Activated CD8-positive, alpha-beta memory T cell treated with anti-CD3 and anti-CD28 coated beads, Interleukin-2, amount 10 ng/mL, durations not matched to agents 7 days and 5 days (primary cell): ENCODE measurements at regions of chr6 and their contacts with region 1.

Region 1: GRCh38 chr6:5302995-5303622 is 41.8 kb downstream of the FARS2 start:
- DNase-seq: peak; percentile 84
- ATAC-seq: peak; percentile 73
- H3K4me3 Mint-ChIP-seq: peak overlapping the region; percentile 69
- H3K27ac Mint-ChIP-seq: peak overlapping the region; percentile 91
- H3K4me1 Mint-ChIP-seq: peaks cover 52% of the 10 kb centered on the region
- H3K27me3 Mint-ChIP-seq: no peaks in the 10 kb centered on the region

Region 2: GRCh38 chr6:5174244-5174643 is 128.9 kb before region 1 on chr6:
- CTCF ChIA-PET with region 1: interaction called, 22 read pairs
- DNase-seq: peak; percentile 89
- ATAC-seq: peak; percentile 99
- H3K4me3 Mint-ChIP-seq: peak overlapping the region; percentile 60
- H3K27ac Mint-ChIP-seq: peak overlapping the region; percentile 95
- H3K4me1 Mint-ChIP-seq: peaks cover 50% of the 10 kb centered on the region
- H3K27me3 Mint-ChIP-seq: no peaks in the 10 kb centered on the region

Region 3: GRCh38 chr6:5260661-5261544 is 42.2 kb before region 1 on chr6 and contains the starts of genes FARS2 and LYRM4:
- CTCF ChIA-PET with region 1: interaction called, 12 read pairs
- DNase-seq: peak; percentile 91
- ATAC-seq: peak; percentile 90
- H3K4me3 Mint-ChIP-seq: peak within 1 kb of the TSS; percentile 92
- H3K27ac Mint-ChIP-seq: peak within 1 kb of the TSS; percentile 100
- H3K4me1 Mint-ChIP-seq: peaks cover 56% of the 10 kb centered on the region
- H3K27me3 Mint-ChIP-seq: no peaks in the 10 kb centered on the region
- total RNA-seq, gene FARS2: 23.2 to 28.3 TPM
- total RNA-seq, gene LYRM4: 36.4 to 39.6 TPM

Region 4: DNA sequence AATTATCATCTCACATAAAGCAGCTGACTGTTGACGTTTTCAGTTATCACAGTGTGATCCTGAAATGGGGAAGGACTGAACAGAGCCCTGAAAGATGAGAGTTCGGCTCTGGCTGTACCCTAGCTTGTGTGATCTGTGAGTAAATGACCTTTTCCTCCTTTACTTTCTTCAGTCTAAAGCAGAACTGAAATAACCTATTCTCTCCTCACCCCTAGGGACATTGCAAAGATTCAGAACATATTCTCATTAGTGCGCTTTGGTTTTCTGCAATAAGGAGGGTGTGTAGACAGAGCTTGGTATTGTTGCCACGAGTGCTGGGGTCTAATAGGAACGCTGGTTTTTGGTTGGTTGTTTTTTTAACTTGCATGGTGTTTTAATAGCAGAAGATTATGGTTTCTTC is 25.1 kb before region 1 on chr6:
- CTCF ChIA-PET with region 1: interaction called, 23 read pairs
- DNase-seq: no peak
- ATAC-seq: no peak
- H3K4me3 Mint-ChIP-seq: no peak overlapping the region
- H3K27ac Mint-ChIP-seq: no peak overlapping the region
- H3K4me1 Mint-ChIP-seq: peaks cover 83% of the 10 kb centered on the region
- H3K27me3 Mint-ChIP-seq: no peaks in the 10 kb centered on the region

Region 5: GRCh38 chr6:5315881-5316280 is 12.8 kb after region 1 on chr6:
- CTCF ChIA-PET with region 1: interaction called, 10 read pairs
- DNase-seq: no peak
- ATAC-seq: no peak
- H3K4me3 Mint-ChIP-seq: no peak overlapping the region
- H3K27ac Mint-ChIP-seq: no peak overlapping the region
- H3K4me1 Mint-ChIP-seq: peaks cover 4% of the 10 kb centered on the region
- H3K27me3 Mint-ChIP-seq: no peaks in the 10 kb centered on the region

Region 6: GRCh38 chr6:5490500-5491069 is 187.5 kb after region 1 on chr6:
- CTCF ChIA-PET with region 1: no interaction called
- DNase-seq: no peak
- ATAC-seq: no peak
- H3K4me3 Mint-ChIP-seq: no peak overlapping the region
- H3K27ac Mint-ChIP-seq: no peak overlapping the region
- H3K4me1 Mint-ChIP-seq: peaks cover 7% of the 10 kb centered on the region
- H3K27me3 Mint-ChIP-seq: no peaks in the 10 kb centered on the region